Caco-2 (cell line): ENCODE measurements at regions of chr7 and their contacts with region 1.

Region 1: GRCh38 chr7:98014352-98014751 is 24.4 kb upstream of the OCM2 start:
- DNase-seq: no peak
- H3K4me3 ChIP-seq: no peak overlapping the region
- H3K4me3 Mint-ChIP-seq: no peak overlapping the region
- H3K27ac Mint-ChIP-seq: no peak overlapping the region
- H3K4me1 ChIP-seq: no peaks in the 10 kb centered on the region
- H3K4me1 Mint-ChIP-seq: no peaks in the 10 kb centered on the region
- H3K27me3 ChIP-seq: no peaks in the 10 kb centered on the region
- H3K27me3 Mint-ChIP-seq: no peaks in the 10 kb centered on the region
- CTCF ChIP-seq: no peak

Region 2: DNA sequence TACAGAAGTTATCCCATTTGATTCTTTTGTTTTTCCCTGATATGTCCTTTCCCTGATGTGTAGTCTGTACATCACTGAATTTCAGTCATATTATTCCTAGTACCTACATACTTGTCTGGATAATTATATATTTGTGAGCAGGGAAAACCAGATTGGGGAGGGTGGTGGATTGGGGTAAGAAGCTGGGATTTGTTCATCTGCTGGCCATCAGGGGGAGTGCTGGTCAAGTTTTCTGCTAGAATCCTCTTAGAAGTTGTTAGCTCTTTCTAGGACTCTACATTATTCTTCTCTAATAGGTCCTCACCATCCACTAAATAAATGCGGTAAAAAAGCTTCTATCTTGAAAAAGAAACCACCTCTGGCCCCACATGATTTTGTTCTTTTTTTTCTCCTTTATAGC is 515.1 kb before region 1 on chr7:
- CTCF ChIA-PET with region 1: interaction called, 3 read pairs
- POLR2A ChIA-PET with region 1: no interaction called
- intact Hi-C with region 1: loop called (anchors 5 kb)
- DNase-seq: peak; percentile 43 to 51
- H3K4me3 ChIP-seq: no peak overlapping the region
- H3K4me3 Mint-ChIP-seq: no peak overlapping the region
- H3K27ac Mint-ChIP-seq: no peak overlapping the region
- H3K4me1 ChIP-seq: no peaks in the 10 kb centered on the region
- H3K4me1 Mint-ChIP-seq: no peaks in the 10 kb centered on the region
- H3K27me3 ChIP-seq: no peaks in the 10 kb centered on the region
- H3K27me3 Mint-ChIP-seq: peaks cover 7% of the 10 kb centered on the region
- CTCF ChIP-seq: peak; percentile 52 to 76

Region 3: DNA sequence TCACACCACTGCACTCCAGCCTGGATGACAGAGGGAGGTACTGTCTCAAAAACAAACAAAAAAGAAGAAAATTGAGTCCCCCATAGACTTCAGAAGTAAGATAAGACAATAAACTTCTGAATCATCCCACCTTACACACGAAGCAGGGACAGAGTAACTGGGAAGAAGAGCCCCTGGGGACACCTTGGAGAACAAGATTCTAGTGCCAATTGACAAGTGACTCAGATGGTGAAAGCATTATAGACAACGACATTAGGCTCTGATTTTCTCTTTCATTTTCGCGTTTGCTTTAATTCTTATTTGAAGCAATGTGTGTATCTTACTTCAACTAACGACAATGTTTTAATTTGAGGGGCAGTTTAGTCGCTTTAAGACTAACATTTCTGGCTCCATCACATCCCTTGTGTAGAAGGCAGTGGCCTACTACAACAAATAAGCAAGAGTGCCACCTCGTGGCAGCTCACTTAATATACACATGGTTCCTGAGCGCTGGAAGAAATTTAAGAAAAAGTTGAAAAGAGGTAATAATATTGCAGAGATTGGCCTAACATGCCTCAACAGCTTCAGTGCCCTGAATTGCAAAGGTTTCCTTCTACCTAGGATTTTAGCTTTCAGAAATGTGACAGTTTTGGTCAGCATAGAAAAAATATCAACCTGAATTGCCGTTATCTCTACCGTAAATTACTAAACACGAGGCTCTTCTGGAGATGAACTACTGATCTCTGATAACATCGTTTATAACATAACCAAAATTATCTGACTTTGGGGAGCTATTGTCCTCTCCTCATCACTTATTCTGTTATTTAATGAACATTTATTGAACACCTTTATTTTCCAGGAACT is 178.8 kb before region 1 on chr7:
- CTCF ChIA-PET with region 1: no interaction called
- POLR2A ChIA-PET with region 1: no interaction called
- intact Hi-C with region 1: no loop called
- DNase-seq: peak; percentile 62 to 71
- H3K4me3 ChIP-seq: no peak overlapping the region
- H3K4me3 Mint-ChIP-seq: no peak overlapping the region
- H3K27ac Mint-ChIP-seq: no peak overlapping the region
- H3K4me1 ChIP-seq: no peaks in the 10 kb centered on the region
- H3K4me1 Mint-ChIP-seq: no peaks in the 10 kb centered on the region
- H3K27me3 ChIP-seq: no peaks in the 10 kb centered on the region
- H3K27me3 Mint-ChIP-seq: peaks cover 9% of the 10 kb centered on the region
- CTCF ChIP-seq: peak; percentile 60 to 69

Region 4: GRCh38 chr7:97845622-97846203 is 168.6 kb before region 1 on chr7:
- CTCF ChIA-PET with region 1: interaction called, 4 read pairs
- POLR2A ChIA-PET with region 1: no interaction called
- intact Hi-C with region 1: loop called (anchors 2 kb)
- DNase-seq: peak in 1 of 2 experiments; percentile 24
- H3K4me3 ChIP-seq: no peak overlapping the region
- H3K4me3 Mint-ChIP-seq: no peak overlapping the region
- H3K27ac Mint-ChIP-seq: no peak overlapping the region
- H3K4me1 ChIP-seq: no peaks in the 10 kb centered on the region
- H3K4me1 Mint-ChIP-seq: no peaks in the 10 kb centered on the region
- H3K27me3 ChIP-seq: no peaks in the 10 kb centered on the region
- H3K27me3 Mint-ChIP-seq: no peaks in the 10 kb centered on the region
- CTCF ChIP-seq: peak; percentile 16 to 40

Region 5: DNA sequence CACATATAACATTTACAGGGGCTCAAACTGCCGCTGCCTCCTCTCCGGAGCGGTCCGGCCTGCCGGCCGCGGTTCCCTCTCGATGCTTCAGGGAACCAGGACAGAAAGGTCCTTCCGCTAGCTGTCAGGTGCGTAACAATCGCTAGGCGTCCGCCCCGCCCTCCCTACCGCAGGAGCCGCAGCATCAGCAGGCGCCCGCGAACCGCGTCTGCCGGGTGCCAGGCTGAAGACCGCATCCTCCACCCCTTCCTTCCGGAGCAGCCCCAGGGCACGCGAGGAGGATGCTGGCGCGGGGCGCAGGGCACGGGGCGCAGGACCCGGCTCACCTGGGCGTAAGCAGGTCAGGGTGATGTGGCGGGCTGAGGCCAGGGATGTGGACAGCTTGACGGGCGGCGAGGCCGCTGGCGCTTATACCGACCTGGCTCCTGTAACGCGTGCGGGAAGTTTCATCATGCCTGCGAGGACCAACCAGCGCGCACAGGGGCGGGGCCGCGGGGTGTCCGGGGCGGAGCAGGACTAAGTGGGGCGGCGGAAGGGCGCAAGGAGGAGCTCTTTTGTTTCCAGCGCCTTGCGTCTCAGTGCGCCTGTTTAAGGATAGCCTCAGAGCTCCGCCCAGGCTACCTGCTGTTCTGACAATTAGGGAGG is 142.2 kb before region 1 on chr7 and contains the start of gene ASNS:
- CTCF ChIA-PET with region 1: interaction called, 14 read pairs
- POLR2A ChIA-PET with region 1: no interaction called
- intact Hi-C with region 1: loop called (anchors 1 kb)
- DNase-seq: peak; percentile 96 to 98
- H3K4me3 ChIP-seq: peak within 1 kb of the TSS; percentile 97
- H3K4me3 Mint-ChIP-seq: peak within 1 kb of the TSS; percentile 91
- H3K27ac Mint-ChIP-seq: peak within 1 kb of the TSS; percentile 92
- H3K4me1 ChIP-seq: no peaks in the 10 kb centered on the region
- H3K4me1 Mint-ChIP-seq: peaks cover 6% of the 10 kb centered on the region
- H3K27me3 ChIP-seq: no peaks in the 10 kb centered on the region
- H3K27me3 Mint-ChIP-seq: no peaks in the 10 kb centered on the region
- CTCF ChIP-seq: no peak
- total RNA-seq, gene ASNS: 295 and 374 TPM in 2 replicates

Region 6: DNA sequence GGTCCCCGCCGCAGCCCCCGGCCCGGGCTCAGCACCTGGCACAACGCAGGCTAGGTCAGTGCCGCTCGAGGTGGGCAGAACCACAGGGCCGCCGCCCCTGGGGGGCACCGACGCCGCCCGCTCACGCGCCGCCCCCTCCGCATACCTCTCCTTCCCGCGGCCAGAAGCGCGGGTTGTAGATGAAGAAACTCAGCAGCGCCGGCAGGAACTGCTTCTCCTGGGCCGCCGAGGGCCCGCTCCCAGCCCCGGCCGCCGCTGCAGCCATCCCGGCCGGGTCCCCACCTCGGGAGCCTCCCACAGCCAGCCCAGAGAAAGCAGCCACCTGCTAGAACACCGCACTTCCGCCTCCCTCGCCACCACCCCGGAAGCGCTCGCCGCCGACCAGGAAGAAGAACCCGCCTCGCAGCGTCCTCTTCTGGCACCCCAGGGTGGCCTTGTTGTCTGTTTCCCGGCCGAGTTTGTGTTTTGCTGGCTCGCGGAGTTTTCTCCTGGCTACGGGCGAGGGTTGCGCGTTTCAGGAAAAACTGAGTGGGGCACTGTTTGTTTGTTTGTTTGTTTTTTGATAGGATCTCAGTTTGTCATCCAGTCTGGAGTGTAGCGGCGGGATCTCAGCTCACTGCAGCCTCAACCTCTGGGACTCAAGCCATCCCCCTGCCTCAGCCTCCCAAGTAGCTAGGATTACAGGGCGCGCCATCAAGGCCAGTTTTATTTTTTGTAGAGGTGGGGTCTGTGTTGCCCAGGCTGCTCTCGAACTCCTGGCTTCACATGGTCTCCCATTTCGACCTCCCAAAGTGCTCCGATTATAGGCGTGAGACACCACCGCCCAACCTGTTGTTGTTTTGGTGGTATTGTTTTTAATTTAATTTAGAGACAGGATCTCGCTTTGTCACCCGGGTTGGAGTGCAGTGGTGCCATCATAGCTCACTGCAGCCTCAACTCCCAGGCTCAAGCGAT is 42.1 kb before region 1 on chr7:
- CTCF ChIA-PET with region 1: no interaction called
- POLR2A ChIA-PET with region 1: no interaction called
- intact Hi-C with region 1: loop called (anchors 1 kb)
- DNase-seq: peak; percentile 87 to 89
- H3K4me3 ChIP-seq: peak overlapping the region; percentile 82
- H3K4me3 Mint-ChIP-seq: peak overlapping the region; percentile 96
- H3K27ac Mint-ChIP-seq: peak overlapping the region; percentile 88
- H3K4me1 ChIP-seq: no peaks in the 10 kb centered on the region
- H3K4me1 Mint-ChIP-seq: peaks cover 7% of the 10 kb centered on the region
- H3K27me3 ChIP-seq: no peaks in the 10 kb centered on the region
- H3K27me3 Mint-ChIP-seq: no peaks in the 10 kb centered on the region
- CTCF ChIP-seq: peak; percentile 27 to 75

Region 7: GRCh38 chr7:98000356-98000755 is 14.0 kb before region 1 on chr7:
- CTCF ChIA-PET with region 1: interaction called, 13 read pairs
- POLR2A ChIA-PET with region 1: no interaction called
- intact Hi-C with region 1: no loop called
- DNase-seq: no peak
- H3K4me3 ChIP-seq: no peak overlapping the region
- H3K4me3 Mint-ChIP-seq: no peak overlapping the region
- H3K27ac Mint-ChIP-seq: no peak overlapping the region
- H3K4me1 ChIP-seq: no peaks in the 10 kb centered on the region
- H3K4me1 Mint-ChIP-seq: no peaks in the 10 kb centered on the region
- H3K27me3 ChIP-seq: no peaks in the 10 kb centered on the region
- H3K27me3 Mint-ChIP-seq: peaks cover 22% of the 10 kb centered on the region
- CTCF ChIP-seq: no peak